ENCODE measurements at regions of chr19 and their contacts with region 1.

Region 1: DNA sequence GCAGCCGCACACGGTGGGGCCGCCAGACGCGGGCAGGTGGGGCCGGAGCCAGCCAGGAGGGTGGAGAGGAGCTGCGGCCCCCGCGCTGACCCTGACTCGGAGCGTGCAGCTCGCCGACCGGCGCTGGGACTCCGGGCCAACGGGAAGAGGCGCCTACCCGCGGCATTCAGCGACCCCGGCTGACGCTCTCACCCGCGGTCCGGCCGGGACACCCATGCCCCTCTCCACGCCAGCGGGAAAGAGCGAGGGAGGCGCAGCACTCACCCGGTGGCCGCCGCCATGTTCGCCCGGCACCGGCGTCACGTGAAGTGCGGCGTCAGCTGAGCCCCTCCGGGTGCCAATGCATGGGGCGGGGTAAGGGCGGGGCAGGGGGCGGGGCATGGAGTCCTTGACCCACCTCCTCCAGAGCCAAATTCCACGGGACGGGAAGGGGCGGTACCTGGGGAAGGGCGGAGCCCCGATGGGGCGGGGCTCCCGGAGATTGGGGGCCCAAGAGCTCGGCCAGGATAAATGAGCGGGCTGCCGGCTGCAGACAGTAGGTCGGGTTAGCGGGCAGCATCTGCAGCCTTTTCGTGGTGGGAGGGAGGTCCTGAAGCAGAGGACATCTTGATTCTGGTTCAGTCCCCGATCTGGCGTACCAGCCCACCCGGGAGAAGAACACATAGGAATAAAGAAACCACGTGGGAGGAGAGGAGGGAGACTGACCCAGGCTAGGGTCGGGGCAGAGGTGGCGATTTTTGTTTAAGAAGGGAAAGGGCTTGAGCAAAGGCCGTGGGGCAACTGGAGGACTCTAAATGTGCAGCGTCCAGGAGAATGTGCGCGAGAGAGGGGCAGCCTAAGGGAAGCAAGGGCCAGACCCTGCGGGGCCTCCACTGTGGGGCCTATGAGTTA is at the start of gene PEPD:
- DNase-seq: peak; percentile 79
- ATAC-seq: peak; percentile 95
- H3K4me3 ChIP-seq: peak within 1 kb of the TSS; percentile 92
- H3K27ac ChIP-seq: no peak within 1 kb of the TSS
- H3K4me1 ChIP-seq: peaks cover 3% of the 10 kb centered on the region; the same call in 1 of the 2 replicates
- H3K27me3 ChIP-seq: no peaks in the 10 kb centered on the region
- CTCF ChIP-seq: no peak
- total RNA-seq, gene PEPD: 53.4 and 59.0 TPM in 2 replicates

Region 2: GRCh38 chr19:33430674-33431277 is 90.9 kb before region 1 on chr19:
- CTCF ChIA-PET with region 1: no interaction called
- POLR2A ChIA-PET with region 1: no interaction called
- intact Hi-C with region 1: loop called (anchors 1 kb)
- DNase-seq: peak; percentile 71
- ATAC-seq: peak; percentile 97
- H3K4me3 ChIP-seq: no peak overlapping the region
- H3K27ac ChIP-seq: no peak overlapping the region
- H3K4me1 ChIP-seq: no peaks in the 10 kb centered on the region
- H3K27me3 ChIP-seq: no peaks in the 10 kb centered on the region
- CTCF ChIP-seq: peak; percentile 74

Region 3: GRCh38 chr19:33459222-33460090 is 62.3 kb before region 1 on chr19:
- CTCF ChIA-PET with region 1: no interaction called
- POLR2A ChIA-PET with region 1: no interaction called
- intact Hi-C with region 1: no loop called
- DNase-seq: no peak
- ATAC-seq: no peak
- H3K4me3 ChIP-seq: no peak overlapping the region
- H3K27ac ChIP-seq: no peak overlapping the region
- H3K4me1 ChIP-seq: no peaks in the 10 kb centered on the region
- H3K27me3 ChIP-seq: no peaks in the 10 kb centered on the region
- CTCF ChIP-seq: no peak

Region 4: DNA sequence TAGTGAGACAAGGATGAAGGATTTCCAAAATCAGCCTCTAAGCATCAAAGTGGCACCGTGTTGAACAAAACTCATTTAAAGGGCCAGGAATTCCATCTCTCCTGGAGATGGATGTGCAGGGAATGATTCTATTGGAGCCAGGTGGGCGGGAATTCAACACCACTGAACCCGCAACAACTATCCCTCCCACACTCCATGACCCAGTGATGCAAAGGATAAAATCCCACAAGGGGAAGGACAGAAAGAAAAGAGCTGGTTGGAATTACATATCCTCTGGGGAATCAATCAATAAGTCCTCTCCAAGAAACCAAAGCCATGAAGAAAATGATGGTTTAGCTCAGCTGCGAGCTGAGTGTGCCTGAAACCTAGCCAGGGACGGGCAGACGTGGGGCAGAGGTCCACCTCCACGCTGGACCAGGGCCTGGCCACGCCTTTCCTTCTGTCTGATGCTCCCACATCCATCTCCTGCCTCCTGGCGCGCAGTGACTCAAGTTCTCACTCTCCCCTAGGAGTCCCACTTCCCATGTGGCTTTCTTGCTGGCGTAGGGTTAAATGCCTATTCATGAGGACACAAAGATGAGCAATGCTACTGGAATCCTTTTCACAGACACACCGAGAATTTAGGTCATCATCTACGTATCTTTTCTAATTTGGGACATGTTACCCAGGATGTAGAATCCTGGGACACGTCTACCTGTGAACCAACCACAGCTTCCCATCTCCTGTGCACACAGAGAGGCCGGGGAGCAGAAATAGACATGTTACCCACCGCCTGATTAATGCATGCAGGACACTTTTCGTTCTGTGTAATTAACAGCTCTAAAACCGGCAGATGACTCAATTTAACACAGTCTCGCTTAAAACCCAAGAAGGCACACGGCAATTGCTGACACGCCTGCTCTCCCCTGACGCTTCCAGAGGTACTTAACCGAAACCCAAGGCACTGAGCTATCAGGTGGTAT is 48.8 kb before region 1 on chr19:
- CTCF ChIA-PET with region 1: no interaction called
- POLR2A ChIA-PET with region 1: interaction called, 3 read pairs
- intact Hi-C with region 1: loop called (anchors 5 kb)
- DNase-seq: peak; percentile 85
- ATAC-seq: peak; percentile 88
- H3K4me3 ChIP-seq: peak overlapping the region; percentile 28; the same call in 1 of the 2 replicates
- H3K27ac ChIP-seq: peak overlapping the region; percentile 95
- H3K4me1 ChIP-seq: peaks cover 24% of the 10 kb centered on the region
- H3K27me3 ChIP-seq: no peaks in the 10 kb centered on the region
- CTCF ChIP-seq: 0 out of 2 replicates have a peak, but pooled peaks have one; percentile 11

Region 5: DNA sequence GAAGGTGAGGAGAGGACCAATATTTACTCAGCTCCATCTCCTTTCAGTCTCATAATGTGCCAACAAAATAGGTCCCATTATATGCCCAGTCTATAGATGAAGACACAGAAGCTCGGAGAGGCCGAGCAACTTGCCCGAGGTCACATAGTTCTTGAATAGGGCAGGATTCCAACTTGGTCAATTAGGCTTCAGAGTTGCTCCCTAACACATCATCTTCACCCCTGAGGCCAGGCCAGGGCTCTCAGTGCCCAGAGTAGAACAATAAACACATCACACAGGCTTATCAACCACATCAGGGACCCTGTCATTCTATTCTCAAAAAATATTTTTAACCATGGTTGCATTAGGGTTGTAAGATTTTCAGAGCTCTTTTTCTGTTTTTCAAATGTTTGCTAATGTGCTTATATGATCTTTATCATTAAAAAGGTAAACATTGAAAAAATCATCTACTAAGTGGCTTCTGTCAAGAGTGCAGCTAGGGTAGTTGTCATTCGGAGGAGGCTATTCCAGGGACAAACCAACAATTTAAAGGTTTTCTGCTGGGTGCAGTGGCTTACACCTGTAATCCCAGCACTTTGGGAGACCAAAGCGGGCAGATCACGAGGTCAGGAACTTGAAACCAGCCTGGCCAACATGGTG is 20.2 kb after region 1 on chr19:
- CTCF ChIA-PET with region 1: no interaction called
- POLR2A ChIA-PET with region 1: no interaction called
- intact Hi-C with region 1: no loop called
- DNase-seq: no peak
- ATAC-seq: no peak
- H3K4me3 ChIP-seq: no peak overlapping the region
- H3K27ac ChIP-seq: no peak overlapping the region
- H3K4me1 ChIP-seq: no peaks in the 10 kb centered on the region
- H3K27me3 ChIP-seq: peaks cover 19% of the 10 kb centered on the region
- CTCF ChIP-seq: no peak